PC-3 (cell line): ENCODE measurements at regions of chr6 and their contacts with region 1.

Region 1: DNA sequence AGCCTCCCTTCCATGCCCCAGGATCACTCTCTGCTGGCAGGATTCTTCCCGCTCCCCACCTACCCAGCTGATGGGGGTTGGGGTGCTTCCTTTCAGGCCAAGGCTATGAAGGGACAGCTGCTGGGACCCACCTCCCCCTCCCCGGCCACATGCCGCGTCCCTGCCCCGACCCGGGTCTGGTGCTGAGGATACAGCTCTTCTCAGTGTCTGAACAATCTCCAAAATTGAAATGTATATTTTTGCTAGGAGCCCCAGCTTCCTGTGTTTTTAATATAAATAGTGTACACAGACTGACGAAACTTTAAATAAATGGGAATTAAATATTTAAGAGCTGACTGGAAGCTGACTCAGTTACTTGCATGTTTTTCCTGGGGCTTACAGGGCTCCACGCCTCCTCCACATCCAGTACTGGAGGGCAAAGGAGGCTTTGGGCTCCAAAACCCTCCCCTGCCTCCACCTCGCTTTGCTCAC is 24.3 kb upstream of the FANCE start:
- DNase-seq: peak; percentile 95
- ATAC-seq: peak; percentile 82
- H3K4me3 ChIP-seq: peak overlapping the region; percentile 46
- H3K27ac ChIP-seq: peak overlapping the region; percentile 98
- H3K4me1 ChIP-seq: peaks cover 48% of the 10 kb centered on the region
- H3K27me3 ChIP-seq: no peaks in the 10 kb centered on the region
- CTCF ChIP-seq: no peak

Region 2: GRCh38 chr6:35195120-35195780 is 232.6 kb before region 1 on chr6:
- CTCF ChIA-PET with region 1: no interaction called
- POLR2A ChIA-PET with region 1: no interaction called
- intact Hi-C with region 1: no loop called
- DNase-seq: peak; percentile 22
- ATAC-seq: no peak
- H3K4me3 ChIP-seq: no peak overlapping the region
- H3K27ac ChIP-seq: 0 out of 2 replicates have a peak overlapping the region, but pooled peaks have one; percentile 10
- H3K4me1 ChIP-seq: peaks cover 59% of the 10 kb centered on the region
- H3K27me3 ChIP-seq: no peaks in the 10 kb centered on the region
- CTCF ChIP-seq: 0 out of 2 replicates have a peak, but pooled peaks have one; percentile 13

Region 3: DNA sequence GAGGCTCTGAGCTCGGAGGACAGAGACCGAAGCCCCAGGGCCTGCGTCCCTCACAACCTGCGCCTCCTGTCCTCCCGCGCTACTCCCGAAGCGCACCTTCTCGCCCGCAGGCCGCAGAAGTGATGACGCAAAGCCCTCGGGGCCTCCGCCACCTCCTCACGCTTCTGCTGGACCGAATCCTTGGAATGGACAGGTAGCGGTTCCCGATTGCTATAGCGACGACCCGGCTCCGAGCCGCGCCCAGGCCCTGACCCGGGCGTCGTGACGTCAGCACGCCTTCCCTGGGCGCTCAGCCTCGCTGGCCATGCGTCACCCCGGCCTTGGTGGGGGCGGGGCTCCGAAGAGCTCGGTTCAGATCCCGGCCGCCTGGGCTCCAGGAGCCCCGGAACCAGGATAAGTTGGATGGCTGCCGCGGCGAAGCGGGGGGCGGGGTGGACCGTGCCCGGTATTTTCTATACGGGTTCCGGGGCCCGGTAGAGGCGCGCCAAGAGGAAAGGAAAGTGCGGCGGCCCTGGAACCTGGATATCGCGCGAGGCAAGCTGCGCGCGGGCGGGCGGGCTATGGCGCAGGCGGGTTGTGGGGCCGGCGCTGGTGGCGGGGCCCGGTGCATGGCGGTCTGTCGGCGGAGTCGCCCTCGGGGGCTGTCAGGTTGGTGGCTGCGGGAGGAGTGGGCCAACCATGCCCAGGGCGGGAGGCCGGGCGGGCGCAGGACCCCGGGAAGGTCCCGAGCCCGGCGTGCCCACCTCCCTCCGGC is 168.5 kb before region 1 on chr6 and contains the start of gene ZNF76:
- CTCF ChIA-PET with region 1: no interaction called
- POLR2A ChIA-PET with region 1: no interaction called
- intact Hi-C with region 1: no loop called
- DNase-seq: peak; percentile 99
- ATAC-seq: peak; percentile 95
- H3K4me3 ChIP-seq: peak within 1 kb of the TSS; percentile 89
- H3K27ac ChIP-seq: peak within 1 kb of the TSS; percentile 81
- H3K4me1 ChIP-seq: peaks cover 18% of the 10 kb centered on the region
- H3K27me3 ChIP-seq: no peaks in the 10 kb centered on the region
- CTCF ChIP-seq: no peak
- total RNA-seq, gene ZNF76: 17.9 and 20.8 TPM in 2 replicates

Region 4: DNA sequence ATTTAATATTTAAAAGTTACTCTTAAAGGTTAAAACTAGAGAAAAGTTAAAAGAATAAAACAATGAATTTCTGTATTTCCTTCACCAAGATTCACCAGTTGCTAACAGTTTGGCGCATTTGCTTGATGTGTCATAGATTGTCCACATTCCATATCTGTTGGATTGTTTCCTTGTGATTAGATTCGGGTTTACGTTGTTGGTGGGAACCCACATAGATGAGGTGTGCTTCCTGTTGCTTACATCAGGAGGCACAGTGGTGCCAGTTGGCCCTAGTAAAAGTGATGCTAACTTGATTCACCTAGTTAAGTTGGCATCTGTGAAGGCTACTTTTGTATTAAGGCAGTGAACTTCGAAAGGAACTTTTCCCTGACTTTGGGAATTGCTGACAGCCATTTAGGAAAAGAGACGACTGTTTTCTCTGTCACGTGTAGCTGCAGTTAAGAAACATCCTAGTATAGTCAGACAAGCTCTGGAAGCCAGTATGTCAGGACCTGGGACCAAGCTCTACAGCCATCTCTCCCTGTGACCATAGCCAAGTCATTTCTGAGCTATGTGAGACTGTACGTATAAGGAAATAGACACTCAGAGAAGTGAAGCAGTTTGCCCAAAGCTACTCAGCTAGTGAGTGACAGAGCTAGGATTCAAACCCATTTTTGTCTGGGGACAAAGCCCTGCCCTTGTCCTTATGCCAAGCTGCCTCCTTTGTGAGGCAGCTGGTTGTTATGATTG is 36.5 kb before region 1 on chr6:
- CTCF ChIA-PET with region 1: interaction called, 3 read pairs
- POLR2A ChIA-PET with region 1: interaction called, 7 read pairs
- intact Hi-C with region 1: loop called (anchors 1 kb)
- DNase-seq: peak; percentile 99
- ATAC-seq: peak; percentile 75
- H3K4me3 ChIP-seq: peak overlapping the region; percentile 29; the same call in 1 of the 2 replicates
- H3K27ac ChIP-seq: peak overlapping the region; percentile 99
- H3K4me1 ChIP-seq: peaks cover 55% of the 10 kb centered on the region
- H3K27me3 ChIP-seq: no peaks in the 10 kb centered on the region
- CTCF ChIP-seq: peak; percentile 22; the same call in 1 of the 2 replicates

Region 5: DNA sequence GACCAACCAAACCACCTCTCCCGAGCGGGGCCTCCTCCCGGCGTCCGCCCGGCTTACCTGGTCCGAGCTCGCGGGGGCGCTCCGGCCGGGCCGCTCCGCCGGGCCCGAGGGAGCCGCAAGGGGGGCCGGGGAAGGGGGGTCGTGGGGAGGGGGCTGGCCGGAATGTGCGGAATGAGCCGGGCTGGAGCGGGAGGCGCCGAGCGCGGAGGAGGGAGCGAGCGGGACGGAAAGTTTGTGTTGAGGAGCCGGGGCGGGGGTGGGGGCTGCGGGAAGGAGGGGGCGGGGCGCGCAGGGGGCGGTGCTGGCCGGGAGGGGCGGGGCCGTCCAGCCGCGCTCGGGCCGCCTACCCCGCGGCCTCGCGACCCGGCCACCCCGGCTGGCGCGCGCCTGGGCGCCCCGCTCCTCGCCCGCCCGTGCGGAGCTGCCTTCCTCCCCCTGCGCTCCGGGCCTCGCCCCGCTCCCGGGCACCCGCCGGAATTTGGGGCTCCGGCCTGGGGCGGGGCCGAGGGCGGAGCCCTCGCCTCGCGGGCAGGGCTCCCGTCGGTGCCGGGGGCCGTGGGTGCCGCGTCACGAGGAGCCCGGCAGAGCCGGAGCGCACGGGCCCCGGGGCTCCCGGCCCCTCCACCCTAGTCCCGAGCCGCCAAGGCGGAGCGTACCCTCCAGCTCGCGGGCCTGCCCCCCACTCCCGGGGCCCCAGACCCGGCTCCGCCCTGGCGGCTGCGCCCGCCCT is 69.1 kb after region 1 on chr6 and contains the start of gene TEAD3:
- CTCF ChIA-PET with region 1: no interaction called
- POLR2A ChIA-PET with region 1: interaction called, 14 read pairs
- intact Hi-C with region 1: no loop called
- DNase-seq: peak; percentile 56
- ATAC-seq: peak; percentile 57
- H3K4me3 ChIP-seq: peak within 1 kb of the TSS; percentile 85
- H3K27ac ChIP-seq: peak within 1 kb of the TSS; percentile 35; the same call in 1 of the 2 replicates
- H3K4me1 ChIP-seq: peaks cover 32% of the 10 kb centered on the region
- H3K27me3 ChIP-seq: no peaks in the 10 kb centered on the region
- CTCF ChIP-seq: peak; percentile 31; the same call in 1 of the 2 replicates
- total RNA-seq, gene TEAD3: 9.2 and 15.4 TPM in 2 replicates